Activated CD8-positive, alpha-beta memory T cell treated with anti-CD3 and anti-CD28 coated beads, Interleukin-2, amount 10 ng/mL, durations not matched to agents 7 days and 5 days (primary cell): ENCODE measurements at regions of chr3 and their contacts with region 1.

Region 1: DNA sequence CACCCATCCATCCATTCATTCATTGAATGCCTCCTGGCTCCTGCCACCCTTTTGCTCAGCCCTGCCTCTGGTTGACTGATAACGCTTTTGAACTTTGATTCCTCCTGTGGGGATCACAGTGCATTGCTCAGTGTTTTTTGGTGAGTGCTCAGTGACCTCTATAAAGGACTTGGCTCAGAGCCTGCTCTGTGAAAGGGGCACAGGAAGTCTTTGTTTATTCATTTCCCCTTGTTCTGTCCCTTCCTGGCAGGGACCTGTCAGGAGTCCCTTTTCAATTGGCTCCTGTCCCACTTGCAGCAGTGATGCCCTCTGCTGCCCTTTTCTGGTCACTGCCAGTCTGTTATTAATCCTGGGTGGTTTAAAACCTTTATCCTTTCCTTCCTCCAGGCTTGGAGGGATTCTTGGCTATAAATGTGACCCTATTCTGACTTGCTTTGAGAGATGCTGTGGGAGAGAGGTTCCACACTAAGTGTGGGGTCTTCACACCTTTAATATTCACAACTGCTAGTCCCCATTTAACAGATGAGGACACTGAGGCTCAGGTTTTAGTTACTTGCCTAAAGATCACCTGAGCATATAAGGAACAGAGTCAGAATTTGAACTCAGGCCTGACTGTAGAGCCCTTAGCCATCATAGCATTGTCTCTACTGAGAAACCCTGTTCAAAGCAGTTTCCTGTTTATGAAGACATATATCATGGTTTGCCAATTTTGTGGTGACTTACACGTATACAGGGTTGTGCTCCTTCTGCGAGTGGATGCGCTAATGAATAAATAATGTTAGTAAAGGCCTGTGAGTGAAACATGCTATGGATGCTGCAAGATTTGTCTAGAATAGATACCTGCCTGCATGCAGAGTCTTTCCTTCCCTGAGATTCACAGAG is 23.2 kb upstream of the TATDN2 start:
- DNase-seq: peak; percentile 85
- ATAC-seq: peak; percentile 62
- H3K4me3 Mint-ChIP-seq: peak overlapping the region; percentile 7
- H3K27ac Mint-ChIP-seq: peak overlapping the region; percentile 79
- H3K4me1 Mint-ChIP-seq: peaks cover 79% of the 10 kb centered on the region
- H3K27me3 Mint-ChIP-seq: no peaks in the 10 kb centered on the region

Region 2: DNA sequence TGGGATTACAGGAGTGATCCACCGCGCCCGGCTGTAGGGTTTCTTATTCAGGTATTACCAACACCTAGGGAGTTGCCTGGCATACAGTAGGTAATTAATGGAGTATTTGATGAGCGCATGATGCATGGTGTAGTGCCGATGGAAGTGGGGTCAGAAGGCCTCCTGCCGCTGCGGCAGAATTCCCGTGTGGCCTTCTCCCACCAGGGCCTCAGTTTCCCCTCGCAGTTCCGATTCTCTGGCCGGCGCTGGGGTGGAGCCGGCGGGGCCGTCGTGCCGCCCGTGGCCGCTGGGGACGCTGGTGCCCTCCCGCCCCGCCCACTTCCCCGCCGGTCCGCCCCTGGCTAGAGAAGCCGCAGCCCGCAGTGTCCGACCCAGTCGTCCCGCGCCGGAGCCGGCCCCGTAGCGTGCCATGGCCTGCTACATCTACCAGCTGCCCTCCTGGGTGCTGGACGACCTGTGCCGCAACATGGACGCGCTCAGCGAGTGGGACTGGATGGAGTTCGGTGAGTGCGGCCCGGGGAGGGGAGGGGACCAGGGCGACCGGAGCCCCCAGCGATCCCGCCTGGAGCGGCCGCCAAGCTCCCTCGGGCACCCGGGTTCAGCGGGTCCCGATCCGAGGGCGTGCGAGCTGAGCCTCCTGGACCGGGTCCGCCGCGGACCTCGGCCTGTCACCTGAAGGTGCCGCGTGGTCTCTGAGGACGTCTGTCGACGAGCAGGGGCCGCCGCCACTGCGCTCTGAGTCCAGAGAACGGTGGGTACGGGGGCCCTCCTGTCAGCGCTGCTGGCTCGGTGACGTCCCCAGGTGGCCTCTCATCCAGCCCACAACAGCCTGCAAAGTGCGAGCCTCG is 60.3 kb before region 1 on chr3 and contains the start of gene IRAK2:
- CTCF ChIA-PET with region 1: interaction called, 19 read pairs
- DNase-seq: peak; percentile 69
- ATAC-seq: peak; percentile 95
- H3K4me3 Mint-ChIP-seq: peak within 1 kb of the TSS; percentile 71
- H3K27ac Mint-ChIP-seq: no peak within 1 kb of the TSS
- H3K4me1 Mint-ChIP-seq: peaks cover 16% of the 10 kb centered on the region
- H3K27me3 Mint-ChIP-seq: no peaks in the 10 kb centered on the region
- total RNA-seq, gene IRAK2: 3.0 to 9.1 TPM

Region 3: DNA sequence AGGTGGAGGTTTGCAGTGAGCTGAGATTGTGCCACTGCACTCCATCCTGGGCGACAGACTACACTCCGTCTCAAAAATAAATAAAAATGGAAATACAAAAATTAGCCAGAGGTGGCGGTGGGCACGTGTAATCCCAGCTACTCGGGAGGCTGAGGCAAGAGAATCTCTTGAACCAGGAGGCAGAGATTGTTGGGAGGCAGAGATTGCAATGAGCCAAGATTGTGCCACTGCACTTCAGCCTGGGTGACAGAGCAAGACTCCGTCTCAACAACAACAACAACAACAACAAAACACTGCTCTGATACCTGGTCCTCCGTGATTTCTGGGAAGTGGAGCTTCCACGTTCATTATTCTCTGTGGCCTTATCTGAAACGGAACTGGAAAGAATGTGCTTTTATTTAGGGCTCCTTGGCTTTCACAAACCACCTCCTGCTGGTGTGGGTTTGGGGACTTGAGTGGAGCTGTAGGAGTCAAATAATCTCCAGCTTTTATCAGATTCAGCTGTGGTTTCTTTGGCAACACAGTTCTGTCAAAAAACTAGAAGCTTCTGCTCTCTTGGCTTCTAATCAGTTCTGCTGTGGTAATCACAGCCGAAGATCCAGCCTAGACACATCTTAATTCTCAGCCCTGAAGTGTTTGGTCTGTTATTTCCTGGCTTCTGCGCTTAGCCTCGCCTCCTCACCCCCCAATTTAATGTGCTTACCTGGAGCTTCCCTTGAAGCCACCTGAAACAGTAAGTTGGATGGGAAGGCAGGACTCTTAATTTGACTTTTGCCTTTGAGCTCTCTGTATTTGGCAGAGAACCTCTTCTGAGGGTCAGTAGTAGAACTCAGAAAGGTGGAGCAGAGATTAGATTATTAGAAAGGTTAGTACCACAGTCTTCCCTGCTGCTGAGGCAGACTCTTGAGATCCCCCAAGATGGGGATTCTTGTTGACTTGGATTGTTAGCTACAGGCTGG is 38.9 kb before region 1 on chr3:
- CTCF ChIA-PET with region 1: interaction called, 24 read pairs
- DNase-seq: no peak
- ATAC-seq: peak; percentile 58
- H3K4me3 Mint-ChIP-seq: no peak overlapping the region
- H3K27ac Mint-ChIP-seq: peak overlapping the region; percentile 53
- H3K4me1 Mint-ChIP-seq: peaks cover 52% of the 10 kb centered on the region
- H3K27me3 Mint-ChIP-seq: no peaks in the 10 kb centered on the region

Region 4: GRCh38 chr3:10192953-10193691 is 31.9 kb before region 1 on chr3:
- CTCF ChIA-PET with region 1: interaction called, 24 read pairs
- DNase-seq: peak; percentile 67
- ATAC-seq: peak; percentile 11
- H3K4me3 Mint-ChIP-seq: no peak overlapping the region
- H3K27ac Mint-ChIP-seq: peak overlapping the region; percentile 98
- H3K4me1 Mint-ChIP-seq: peaks cover 79% of the 10 kb centered on the region
- H3K27me3 Mint-ChIP-seq: no peaks in the 10 kb centered on the region

Region 5: DNA sequence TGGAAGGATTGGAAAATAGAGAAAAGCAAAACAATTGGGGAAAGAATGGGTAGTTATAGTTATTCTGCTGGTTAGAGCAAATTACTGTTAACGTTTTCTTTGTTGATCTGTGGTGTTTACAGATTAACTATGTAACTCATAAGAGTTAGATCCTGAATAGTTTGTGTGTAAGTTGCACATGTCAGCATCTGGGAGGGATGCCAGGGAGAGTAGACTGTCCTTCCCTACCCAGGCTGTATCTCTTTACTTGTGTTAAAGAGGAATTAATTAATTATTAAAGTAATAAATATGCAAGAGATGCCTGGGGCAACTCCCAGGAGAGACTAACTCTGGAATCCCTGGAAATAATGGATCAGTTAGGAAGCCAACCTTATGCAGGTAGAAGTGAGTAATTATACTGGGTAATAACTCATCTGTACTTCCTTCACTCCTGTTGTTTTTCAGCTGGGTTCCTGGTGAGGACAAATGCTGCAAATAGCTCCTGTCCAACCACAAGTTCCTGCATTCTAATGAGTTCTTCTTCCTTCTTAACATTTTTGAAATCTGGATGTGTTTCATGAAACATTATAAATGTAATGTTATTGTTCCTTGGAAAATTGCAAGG is 48.8 kb after region 1 on chr3:
- CTCF ChIA-PET with region 1: no interaction called
- DNase-seq: no peak
- ATAC-seq: no peak
- H3K4me3 Mint-ChIP-seq: no peak overlapping the region
- H3K27ac Mint-ChIP-seq: no peak overlapping the region
- H3K4me1 Mint-ChIP-seq: peaks cover 35% of the 10 kb centered on the region
- H3K27me3 Mint-ChIP-seq: no peaks in the 10 kb centered on the region